CD4-positive, alpha-beta T cell (primary cell): ENCODE measurements at regions of chr6 and their contacts with region 1.

Region 1: GRCh38 chr6:36605560-36606391 is 11.6 kb downstream of the SRSF3 start:
- DNase-seq: peak in 1 of 14 experiments; percentile 15
- ATAC-seq: peak; percentile 25
- H3K4me3 ChIP-seq: no peak overlapping the region
- H3K4me3 Mint-ChIP-seq: peak overlapping the region; percentile 72
- H3K27ac ChIP-seq: peak overlapping the region in 1 of 2 donors; percentile 28
- H3K27ac Mint-ChIP-seq: peak overlapping the region; percentile 97
- H3K4me1 ChIP-seq: peaks cover 61% of the 10 kb centered on the region
- H3K4me1 Mint-ChIP-seq: peaks cover 88% of the 10 kb centered on the region
- H3K27me3 ChIP-seq: no peaks in the 10 kb centered on the region
- H3K27me3 Mint-ChIP-seq: no peaks in the 10 kb centered on the region
- CTCF ChIP-seq: no peak

Region 2: GRCh38 chr6:36594029-36594815 is 11.6 kb before region 1 on chr6 and contains the start of gene SRSF3:
- CTCF ChIA-PET with region 1: interaction called, 5 read pairs
- POLR2A ChIA-PET with region 1: interaction called, 60 read pairs
- intact Hi-C with region 1: loop called in 1 of 2 experiments (anchors 1 kb)
- DNase-seq: peak; percentile 89 to 99 (median 94)
- ATAC-seq: peak; percentile 87
- H3K4me3 ChIP-seq: peak within 1 kb of the TSS; percentile 95
- H3K4me3 Mint-ChIP-seq: peak within 1 kb of the TSS; percentile 94
- H3K27ac ChIP-seq: peak within 1 kb of the TSS; percentile 97 to 99
- H3K27ac Mint-ChIP-seq: peak within 1 kb of the TSS; percentile 97
- H3K4me1 ChIP-seq: peaks cover 47% of the 10 kb centered on the region
- H3K4me1 Mint-ChIP-seq: peaks cover 54% of the 10 kb centered on the region
- H3K27me3 ChIP-seq: no peaks in the 10 kb centered on the region
- H3K27me3 Mint-ChIP-seq: peaks cover 5% of the 10 kb centered on the region
- CTCF ChIP-seq: peak; percentile 52
- total RNA-seq, gene SRSF3: 550 to 556 TPM

Region 3: GRCh38 chr6:36735110-36736071 is 129.6 kb after region 1 on chr6:
- CTCF ChIA-PET with region 1: no interaction called
- POLR2A ChIA-PET with region 1: no interaction called
- intact Hi-C with region 1: no loop called
- DNase-seq: peak in 6 of 14 experiments; percentile 9 to 73 (median 42)
- ATAC-seq: peak; percentile 93
- H3K4me3 ChIP-seq: peak overlapping the region; percentile 16
- H3K4me3 Mint-ChIP-seq: peak overlapping the region; percentile 38
- H3K27ac ChIP-seq: no peak overlapping the region
- H3K27ac Mint-ChIP-seq: no peak overlapping the region
- H3K4me1 ChIP-seq: peaks cover 17% of the 10 kb centered on the region
- H3K4me1 Mint-ChIP-seq: peaks cover 6% of the 10 kb centered on the region
- H3K27me3 ChIP-seq: no peaks in the 10 kb centered on the region
- H3K27me3 Mint-ChIP-seq: no peaks in the 10 kb centered on the region
- CTCF ChIP-seq: no peak